PC-3 (cell line): ENCODE measurements at regions of chr12 and their contacts with region 1.

Region 1: DNA sequence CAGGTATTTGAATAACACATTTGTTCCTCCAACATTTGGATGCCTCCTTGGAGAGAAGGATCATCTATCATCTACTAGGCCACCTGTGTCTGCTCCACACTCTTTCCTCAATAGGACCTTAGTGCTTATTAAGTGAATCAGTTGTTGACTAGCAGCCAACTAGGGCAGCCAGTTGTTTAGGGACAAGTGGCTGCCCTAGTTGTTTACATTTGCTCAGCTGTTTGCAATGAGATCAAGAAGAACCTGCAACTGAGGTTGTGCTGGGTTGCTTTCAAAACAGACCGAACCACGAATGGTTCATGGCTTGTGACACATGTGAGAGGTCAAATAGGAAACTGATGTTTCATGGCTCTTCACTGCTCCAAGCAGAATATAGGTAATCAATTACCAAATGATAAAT is 53.8 kb downstream of the TMCC3 start:
- DNase-seq: peak; percentile 98
- ATAC-seq: peak; percentile 36
- H3K4me3 ChIP-seq: no peak overlapping the region
- H3K27ac ChIP-seq: peak overlapping the region; percentile 56; the same call in 1 of the 2 replicates
- H3K4me1 ChIP-seq: peaks cover 68% of the 10 kb centered on the region
- H3K27me3 ChIP-seq: no peaks in the 10 kb centered on the region
- CTCF ChIP-seq: no peak

Region 2: DNA sequence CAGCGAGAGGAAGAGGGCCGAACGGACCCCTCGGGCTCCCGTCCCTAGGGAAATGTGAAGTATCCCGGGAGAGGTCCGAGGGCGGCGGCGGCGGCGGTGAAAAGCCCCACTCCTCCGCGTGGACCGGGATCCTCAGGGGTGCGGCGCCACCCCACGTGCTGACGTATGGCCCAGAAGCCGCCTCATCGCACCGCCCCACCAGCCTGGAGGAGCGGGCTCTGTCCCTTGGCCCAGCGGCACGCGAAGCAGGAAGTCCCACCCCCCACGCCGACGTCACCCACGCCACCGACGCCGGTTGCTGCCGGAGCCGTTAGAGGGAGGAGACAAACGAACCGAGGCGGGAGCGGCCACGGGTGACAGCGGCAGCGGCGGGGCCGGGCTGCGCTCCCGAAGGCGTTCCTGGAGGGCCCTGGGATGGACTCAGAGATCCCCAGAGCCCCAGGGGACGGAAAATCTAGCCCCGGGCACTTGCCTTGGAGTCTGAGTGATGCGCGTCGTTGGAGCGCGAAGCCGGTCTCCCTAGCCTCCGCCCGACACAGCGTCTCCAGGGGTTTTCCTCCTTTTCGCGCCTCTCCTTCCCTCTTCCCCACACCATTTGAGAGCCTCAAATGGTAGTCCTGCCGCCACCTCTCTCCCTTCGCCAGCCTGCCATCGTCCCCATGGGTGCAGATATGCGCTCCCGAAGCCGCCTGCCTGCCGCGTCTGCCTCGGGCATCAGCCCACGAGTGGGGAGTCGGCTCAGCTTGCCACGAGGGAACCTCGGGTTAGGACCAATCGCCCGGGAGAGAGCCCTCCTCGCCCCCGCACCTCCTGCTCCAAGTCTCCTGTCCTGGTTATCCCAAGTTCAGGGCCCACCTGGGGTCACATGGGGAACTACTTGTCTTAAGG is 136.6 kb before region 1 on chr12 and contains the start of gene CEP83:
- CTCF ChIA-PET with region 1: no interaction called
- POLR2A ChIA-PET with region 1: no interaction called
- intact Hi-C with region 1: loop called (anchors 10 kb)
- DNase-seq: peak; percentile 94
- ATAC-seq: peak; percentile 98
- H3K4me3 ChIP-seq: peak within 1 kb of the TSS; percentile 85
- H3K27ac ChIP-seq: peak within 1 kb of the TSS; percentile 61
- H3K4me1 ChIP-seq: peaks cover 4% of the 10 kb centered on the region; the same call in 1 of the 2 replicates
- H3K27me3 ChIP-seq: no peaks in the 10 kb centered on the region
- CTCF ChIP-seq: no peak
- total RNA-seq, gene CEP83: 11.8 and 20.4 TPM in 2 replicates

Region 3: DNA sequence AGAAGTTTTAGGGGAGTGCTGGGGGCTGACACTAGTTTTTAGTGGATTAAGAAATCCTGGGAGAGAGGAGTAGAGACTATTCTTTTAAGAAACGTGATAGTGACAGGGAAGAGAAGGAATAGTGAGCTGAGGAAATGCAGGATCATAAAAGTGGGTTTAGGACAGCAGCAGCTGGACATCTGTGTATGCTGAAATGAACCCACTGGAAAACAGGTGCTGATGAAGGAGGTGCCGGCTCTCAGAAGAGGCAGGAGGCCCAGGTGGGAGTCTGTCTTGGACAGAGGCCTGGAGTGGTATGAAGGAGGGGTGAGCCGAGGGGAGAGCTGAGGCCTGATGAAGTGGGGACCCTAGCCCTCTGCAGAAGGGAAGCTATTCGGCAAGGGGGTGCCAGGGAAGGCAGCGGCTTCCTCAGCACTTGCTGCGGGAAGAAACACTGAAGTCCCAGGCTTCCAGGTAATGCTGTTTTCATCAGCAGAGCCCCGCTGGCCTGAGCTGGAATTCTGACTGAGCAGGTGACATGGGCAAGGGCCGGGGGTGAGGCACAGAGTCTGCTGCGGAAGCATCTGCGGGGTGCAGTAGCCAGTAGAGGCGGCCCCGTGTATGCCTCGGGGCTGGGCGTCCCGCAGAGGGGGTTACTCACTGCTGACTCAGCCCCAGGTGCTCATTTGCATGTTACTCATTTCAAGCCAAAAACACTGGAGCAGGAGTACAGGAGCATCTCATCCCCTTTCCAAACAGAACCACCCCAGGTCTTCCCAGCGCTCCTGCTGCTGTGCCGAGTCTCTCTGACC is 36.0 kb before region 1 on chr12:
- CTCF ChIA-PET with region 1: interaction called, 3 read pairs
- POLR2A ChIA-PET with region 1: interaction called, 3 read pairs
- intact Hi-C with region 1: loop called (anchors 5 kb)
- DNase-seq: peak; percentile 97
- ATAC-seq: peak; percentile 96
- H3K4me3 ChIP-seq: peak overlapping the region; percentile 46; the same call in 1 of the 2 replicates
- H3K27ac ChIP-seq: peak overlapping the region; percentile 58
- H3K4me1 ChIP-seq: peaks cover 29% of the 10 kb centered on the region
- H3K27me3 ChIP-seq: no peaks in the 10 kb centered on the region
- CTCF ChIP-seq: no peak

Region 4: GRCh38 chr12:94615284-94616181 is 18.9 kb after region 1 on chr12:
- CTCF ChIA-PET with region 1: no interaction called
- POLR2A ChIA-PET with region 1: no interaction called
- intact Hi-C with region 1: loop called (anchors 2 kb)
- DNase-seq: peak; percentile 90
- ATAC-seq: peak; percentile 52
- H3K4me3 ChIP-seq: peak overlapping the region; percentile 62
- H3K27ac ChIP-seq: peak overlapping the region; percentile 99
- H3K4me1 ChIP-seq: peaks cover 60% of the 10 kb centered on the region
- H3K27me3 ChIP-seq: no peaks in the 10 kb centered on the region
- CTCF ChIP-seq: no peak

Region 5: GRCh38 chr12:94644141-94644979 is 47.8 kb after region 1 on chr12:
- CTCF ChIA-PET with region 1: no interaction called
- POLR2A ChIA-PET with region 1: no interaction called
- intact Hi-C with region 1: loop called (anchors 2 kb)
- DNase-seq: peak; percentile 92
- ATAC-seq: peak; percentile 71
- H3K4me3 ChIP-seq: peak overlapping the region; percentile 56
- H3K27ac ChIP-seq: peak overlapping the region; percentile 94
- H3K4me1 ChIP-seq: peaks cover 48% of the 10 kb centered on the region
- H3K27me3 ChIP-seq: no peaks in the 10 kb centered on the region
- CTCF ChIP-seq: no peak

Region 6: DNA sequence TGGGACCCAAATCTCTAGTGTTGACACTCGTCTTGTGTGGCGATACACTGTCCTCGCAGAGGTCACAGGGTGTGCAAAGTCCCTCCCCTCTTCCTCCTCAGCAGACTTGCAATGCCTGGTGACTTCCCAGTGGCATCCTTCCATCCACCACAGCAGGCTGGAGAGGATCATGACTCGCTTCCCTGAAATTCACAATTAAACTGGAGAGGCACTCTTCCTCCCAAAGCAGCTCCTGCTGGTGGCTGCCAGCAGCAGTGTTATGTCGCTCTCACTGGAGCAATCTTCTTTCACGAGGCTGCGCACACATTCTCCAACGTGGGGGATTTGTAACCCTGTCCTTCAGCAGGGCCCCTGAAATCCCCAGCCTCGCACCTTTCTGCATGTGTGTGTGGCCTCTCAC is 198.9 kb after region 1 on chr12:
- CTCF ChIA-PET with region 1: no interaction called
- POLR2A ChIA-PET with region 1: no interaction called
- intact Hi-C with region 1: no loop called
- DNase-seq: peak; percentile 81
- ATAC-seq: peak; percentile 99
- H3K4me3 ChIP-seq: no peak overlapping the region
- H3K27ac ChIP-seq: no peak overlapping the region
- H3K4me1 ChIP-seq: peaks cover 11% of the 10 kb centered on the region; the same call in 1 of the 2 replicates
- H3K27me3 ChIP-seq: no peaks in the 10 kb centered on the region
- CTCF ChIP-seq: peak; percentile 37; the same call in 1 of the 2 replicates